ENCODE measurements at regions of chr20 and their contacts with region 1.

Region 1: DNA sequence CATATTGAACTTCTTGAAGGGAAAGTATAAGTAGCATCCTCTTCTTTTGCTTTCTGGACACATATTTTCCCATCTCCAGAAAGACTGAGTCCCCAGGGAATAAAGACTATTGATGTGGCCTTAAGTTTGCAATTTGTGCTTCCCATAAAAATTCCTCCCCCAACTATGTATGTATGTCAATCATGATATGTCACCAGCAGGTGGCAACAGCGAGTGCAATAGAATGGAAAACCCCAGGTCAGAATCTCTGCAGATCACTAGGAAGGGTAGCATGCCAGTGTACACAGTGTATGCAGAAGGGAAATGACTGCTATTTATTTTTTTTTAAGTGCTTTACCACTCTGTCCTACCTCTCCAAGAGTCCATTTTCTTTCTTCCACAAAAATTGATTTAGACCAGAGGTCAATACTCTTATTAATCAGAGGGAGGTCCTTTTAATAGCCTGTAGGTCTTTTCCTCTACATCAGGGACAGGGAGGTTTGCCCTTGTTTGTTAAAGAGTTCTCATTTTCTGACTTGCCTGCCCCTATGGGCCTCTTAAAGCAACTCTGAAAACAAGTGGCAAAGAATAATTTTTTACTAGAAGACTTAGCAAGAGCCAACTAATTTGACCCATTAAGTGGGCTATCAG is 61.4 kb downstream of the BMP2 start:
- DNase-seq: peak; percentile 73
- H3K4me3 ChIP-seq: no peak overlapping the region
- H3K27ac ChIP-seq: no peak overlapping the region
- H3K4me1 ChIP-seq: no peaks in the 10 kb centered on the region
- H3K27me3 ChIP-seq: no peaks in the 10 kb centered on the region
- CTCF ChIP-seq: peak; percentile 56

Region 2: DNA sequence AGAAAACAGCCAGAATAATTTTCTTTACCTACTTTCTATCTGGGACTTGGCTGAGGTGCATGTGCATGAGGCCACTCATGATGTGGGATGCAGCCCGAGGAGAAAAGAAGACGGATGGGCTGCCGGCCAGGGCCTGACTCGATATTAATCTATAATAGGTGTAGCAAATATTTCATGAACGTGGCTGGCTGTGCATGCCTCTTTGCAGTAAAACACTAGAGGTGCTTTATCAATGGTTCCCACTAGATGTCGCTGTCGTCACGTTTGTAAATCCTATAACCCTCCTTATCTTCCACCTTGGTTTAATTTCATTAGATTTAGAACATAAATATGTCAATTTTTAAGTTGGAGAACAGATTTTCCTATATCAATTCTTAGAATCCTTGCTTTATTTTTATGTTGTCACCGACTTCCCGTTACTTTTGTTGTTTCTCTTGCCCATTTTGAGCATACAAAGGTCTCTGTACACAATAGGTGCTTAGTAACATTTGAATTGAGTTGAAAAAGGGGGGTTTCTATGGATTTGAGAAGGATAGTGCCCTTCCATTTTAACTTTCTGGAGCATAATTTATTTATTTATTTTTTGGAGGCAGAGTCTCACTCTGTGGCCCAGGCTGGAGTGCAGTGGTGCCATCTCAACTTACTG is 686.4 kb before region 1 on chr20:
- intact Hi-C with region 1: loop called (anchors 10 kb)
- DNase-seq: peak; percentile 68
- H3K4me3 ChIP-seq: no peak overlapping the region
- H3K27ac ChIP-seq: no peak overlapping the region
- H3K4me1 ChIP-seq: no peaks in the 10 kb centered on the region
- H3K27me3 ChIP-seq: no peaks in the 10 kb centered on the region
- CTCF ChIP-seq: peak; percentile 72

Region 3: GRCh38 chr20:6636209-6637159 is 192.4 kb before region 1 on chr20:
- intact Hi-C with region 1: loop called (anchors 5 kb)
- DNase-seq: peak; percentile 51
- H3K4me3 ChIP-seq: no peak overlapping the region
- H3K27ac ChIP-seq: peak overlapping the region; percentile 22
- H3K4me1 ChIP-seq: peaks cover 7% of the 10 kb centered on the region
- H3K27me3 ChIP-seq: no peaks in the 10 kb centered on the region
- CTCF ChIP-seq: peak; percentile 59

Region 4: GRCh38 chr20:7094438-7094997 is 265.6 kb after region 1 on chr20:
- intact Hi-C with region 1: loop called (anchors 5 kb)
- DNase-seq: peak; percentile 52
- H3K4me3 ChIP-seq: no peak overlapping the region
- H3K27ac ChIP-seq: no peak overlapping the region
- H3K4me1 ChIP-seq: no peaks in the 10 kb centered on the region
- H3K27me3 ChIP-seq: no peaks in the 10 kb centered on the region
- CTCF ChIP-seq: peak; percentile 62

Region 5: GRCh38 chr20:7285918-7286556 is 457.1 kb after region 1 on chr20:
- intact Hi-C with region 1: loop called (anchors 5 kb)
- DNase-seq: peak; percentile 72
- H3K4me3 ChIP-seq: no peak overlapping the region
- H3K27ac ChIP-seq: no peak overlapping the region
- H3K4me1 ChIP-seq: no peaks in the 10 kb centered on the region
- H3K27me3 ChIP-seq: no peaks in the 10 kb centered on the region
- CTCF ChIP-seq: peak; percentile 79

Measured in colonic mucosa (tissue), 4 donors.